ENCODE measurements at regions of chr4 and their contacts with region 1.

Region 1: GRCh38 chr4:63090641-63091040 is 1318.6 kb downstream of the TECRL start:
- DNase-seq: no peak
- H3K4me3 ChIP-seq: no peak overlapping the region
- H3K27ac ChIP-seq: no peak overlapping the region
- H3K4me1 ChIP-seq: no peaks in the 10 kb centered on the region
- H3K27me3 ChIP-seq: no peaks in the 10 kb centered on the region
- CTCF ChIP-seq: no peak

Region 2: DNA sequence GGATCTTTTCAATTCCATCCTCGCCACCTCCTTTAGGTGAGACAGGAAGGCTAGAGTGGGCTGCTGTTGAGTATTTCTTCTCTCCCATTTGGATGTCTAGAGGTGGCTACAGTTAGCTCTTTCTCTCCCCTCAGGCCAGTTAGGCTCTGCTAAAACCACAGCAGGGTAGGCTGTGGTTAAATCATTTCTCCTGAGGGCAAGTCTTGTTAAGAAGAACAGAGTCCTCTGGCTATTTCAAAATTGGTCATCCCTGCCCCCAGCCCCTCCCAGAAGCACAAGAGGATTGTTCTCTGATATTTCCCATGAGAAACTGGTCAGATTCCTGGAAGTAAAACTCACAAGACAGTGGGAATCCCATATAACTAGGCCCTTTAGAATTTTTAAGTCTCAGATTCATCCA is 40.9 kb before region 1 on chr4:
- intact Hi-C with region 1: loop called (anchors 2 kb)
- DNase-seq: no peak
- H3K4me3 ChIP-seq: no peak overlapping the region
- H3K27ac ChIP-seq: no peak overlapping the region
- H3K4me1 ChIP-seq: no peaks in the 10 kb centered on the region
- H3K27me3 ChIP-seq: no peaks in the 10 kb centered on the region
- CTCF ChIP-seq: no peak